A549 (cell line): ENCODE measurements at regions of chr17 and their contacts with region 1.

Region 1: GRCh38 chr17:28726226-28727130 is at the start of gene TLCD1:
- DNase-seq: peak; percentile 73 to 92
- ATAC-seq: peak; percentile 44 to 56
- H3K4me3 ChIP-seq: peak within 1 kb of the TSS; percentile 63
- H3K27ac ChIP-seq: peak within 1 kb of the TSS; percentile 94 to 98
- H3K4me1 ChIP-seq: peaks cover 46% of the 10 kb centered on the region
- CTCF ChIP-seq: peak; percentile 100
- EP300 ChIP-seq: no peak
- POLR2A ChIP-seq: no peak
- RAD21 ChIP-seq: peak; percentile 100
- polyA plus RNA-seq, gene TLCD1: 83.3 and 86.7 TPM in 2 replicates

Region 2: DNA sequence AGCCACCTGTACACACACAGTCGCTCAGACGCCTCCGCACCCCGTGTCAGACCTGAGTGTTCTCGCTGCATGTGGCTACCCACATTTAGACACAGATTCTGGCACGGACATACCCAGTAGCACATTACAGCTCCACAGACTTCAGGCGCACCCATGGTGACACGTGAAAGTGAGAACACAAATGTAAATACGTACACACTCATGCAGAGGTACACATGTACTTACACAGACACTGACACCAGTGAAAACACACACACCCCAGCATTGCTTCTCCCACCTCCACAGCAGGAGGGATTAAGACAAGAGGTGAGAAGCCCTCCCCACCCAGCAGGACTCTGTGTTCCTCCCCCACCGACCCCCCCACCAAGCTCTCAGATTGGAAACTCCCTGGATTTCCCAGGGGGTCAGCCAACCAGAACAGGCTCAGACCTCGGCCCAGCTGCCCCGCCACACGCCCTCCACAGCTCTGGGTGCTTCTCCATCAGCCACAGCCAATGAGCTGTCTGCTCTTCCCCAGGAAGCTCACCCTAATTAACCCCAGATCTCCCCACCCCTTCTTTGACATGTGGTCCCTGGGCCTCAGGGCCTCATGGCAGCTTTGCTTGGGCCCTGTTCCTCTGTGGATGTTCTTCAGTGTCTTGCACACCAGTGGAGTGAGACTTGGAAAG is 225.6 kb before region 1 on chr17:
- CTCF ChIA-PET with region 1: no interaction called
- POLR2A ChIA-PET with region 1: no interaction called
- DNase-seq: no peak
- ATAC-seq: peak in 1 of 2 experiments; percentile 25; a peak in 2 of 6 replicates
- H3K4me3 ChIP-seq: no peak overlapping the region
- H3K27ac ChIP-seq: no peak overlapping the region
- H3K4me1 ChIP-seq: no peaks in the 10 kb centered on the region
- CTCF ChIP-seq: no peak
- EP300 ChIP-seq: no peak
- POLR2A ChIP-seq: no peak
- RAD21 ChIP-seq: no peak

Region 3: GRCh38 chr17:28710861-28711722 is 15.4 kb before region 1 on chr17:
- CTCF ChIA-PET with region 1: interaction called, 31 read pairs
- POLR2A ChIA-PET with region 1: interaction called, 10 read pairs
- DNase-seq: peak; percentile 92 to 97
- ATAC-seq: peak; percentile 81 to 94
- H3K4me3 ChIP-seq: peak overlapping the region; percentile 53
- H3K27ac ChIP-seq: peak overlapping the region; percentile 82 to 92
- H3K4me1 ChIP-seq: peaks cover 17% of the 10 kb centered on the region
- CTCF ChIP-seq: no peak
- EP300 ChIP-seq: no peak
- POLR2A ChIP-seq: peak; percentile 81
- RAD21 ChIP-seq: no peak

Region 4: DNA sequence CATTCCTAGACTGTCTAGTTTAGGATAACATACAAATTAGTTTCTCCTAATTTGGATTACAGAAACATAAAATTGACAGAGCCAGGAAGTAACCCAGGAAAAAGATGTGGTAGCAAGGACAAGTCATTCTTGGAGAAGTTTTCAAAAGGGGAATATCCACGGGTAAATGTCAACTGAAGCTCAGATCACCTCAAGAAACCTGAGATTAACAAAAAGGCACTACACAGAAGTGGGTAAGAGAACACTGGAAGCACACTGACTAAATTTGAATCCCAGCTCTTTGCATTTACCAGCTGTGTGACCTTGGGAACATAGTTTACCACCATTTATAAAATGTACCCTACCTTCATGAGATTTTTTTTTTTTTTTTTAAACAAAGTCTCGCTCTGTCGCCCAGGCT is 56.7 kb after region 1 on chr17:
- CTCF ChIA-PET with region 1: interaction called, 11 read pairs
- POLR2A ChIA-PET with region 1: no interaction called
- DNase-seq: no peak
- ATAC-seq: no peak
- H3K4me3 ChIP-seq: no peak overlapping the region
- H3K27ac ChIP-seq: no peak overlapping the region
- H3K4me1 ChIP-seq: no peaks in the 10 kb centered on the region
- CTCF ChIP-seq: no peak
- EP300 ChIP-seq: no peak
- POLR2A ChIP-seq: no peak
- RAD21 ChIP-seq: no peak

Region 5: DNA sequence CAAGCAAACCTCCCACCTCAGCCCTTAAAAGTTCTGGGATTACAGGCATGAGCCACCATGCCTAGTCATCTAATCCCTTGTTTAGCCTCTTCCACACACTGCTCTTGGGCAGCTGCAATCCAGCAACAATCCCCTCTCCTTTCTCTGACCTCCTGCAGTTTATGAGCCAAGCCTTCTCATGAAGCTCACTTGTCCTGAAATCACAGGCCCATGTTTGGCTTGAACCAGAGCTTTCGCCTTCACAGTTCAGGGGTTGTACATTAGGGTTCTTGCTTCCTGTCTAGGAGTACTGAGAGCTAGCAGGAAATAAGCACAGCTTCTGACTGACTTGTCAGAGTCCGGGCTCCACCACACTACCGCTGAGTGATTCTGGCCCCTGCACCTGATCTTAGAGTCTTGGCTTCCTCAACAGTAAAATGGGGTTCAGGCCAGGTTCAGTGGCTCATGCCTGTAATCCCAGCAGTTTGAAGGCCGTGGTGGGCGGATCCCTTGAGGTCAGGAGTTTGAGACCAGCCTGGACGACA is 144.6 kb after region 1 on chr17:
- CTCF ChIA-PET with region 1: interaction called, 15 read pairs
- POLR2A ChIA-PET with region 1: no interaction called
- DNase-seq: no peak
- ATAC-seq: peak in 1 of 2 experiments; percentile 12; a peak in 1 of 6 replicates
- H3K4me3 ChIP-seq: no peak overlapping the region
- H3K27ac ChIP-seq: no peak overlapping the region
- H3K4me1 ChIP-seq: no peaks in the 10 kb centered on the region
- CTCF ChIP-seq: no peak
- EP300 ChIP-seq: no peak
- POLR2A ChIP-seq: no peak
- RAD21 ChIP-seq: no peak

Region 6: GRCh38 chr17:28916302-28916934 is 189.9 kb after region 1 on chr17:
- CTCF ChIA-PET with region 1: interaction called, 116 read pairs
- POLR2A ChIA-PET with region 1: no interaction called
- DNase-seq: peak; percentile 61 to 63
- ATAC-seq: peak; percentile 69 to 87
- H3K4me3 ChIP-seq: no peak overlapping the region
- H3K27ac ChIP-seq: no peak overlapping the region
- H3K4me1 ChIP-seq: no peaks in the 10 kb centered on the region
- CTCF ChIP-seq: peak; percentile 77
- EP300 ChIP-seq: no peak
- POLR2A ChIP-seq: no peak
- RAD21 ChIP-seq: peak; percentile 68 to 69

Region 7: GRCh38 chr17:28946239-28946638 is 219.8 kb after region 1 on chr17:
- CTCF ChIA-PET with region 1: interaction called, 132 read pairs
- POLR2A ChIA-PET with region 1: interaction called, 89 read pairs
- DNase-seq: no peak
- ATAC-seq: no peak
- H3K4me3 ChIP-seq: no peak overlapping the region
- H3K27ac ChIP-seq: no peak overlapping the region
- H3K4me1 ChIP-seq: peaks cover 20% of the 10 kb centered on the region
- CTCF ChIP-seq: no peak
- EP300 ChIP-seq: no peak
- POLR2A ChIP-seq: no peak
- RAD21 ChIP-seq: no peak

Region 8: GRCh38 chr17:29111816-29112499 is 385.5 kb after region 1 on chr17:
- CTCF ChIA-PET with region 1: interaction called, 67 read pairs
- POLR2A ChIA-PET with region 1: interaction called, 4 read pairs
- DNase-seq: peak; percentile 65 to 73
- ATAC-seq: peak; percentile 70 to 83
- H3K4me3 ChIP-seq: no peak overlapping the region
- H3K27ac ChIP-seq: no peak overlapping the region
- H3K4me1 ChIP-seq: peaks cover 17% of the 10 kb centered on the region
- CTCF ChIP-seq: peak; percentile 89
- EP300 ChIP-seq: no peak
- POLR2A ChIP-seq: no peak
- RAD21 ChIP-seq: peak; percentile 78 to 83